ENCODE measurements at regions of chr7 and their contacts with region 1.

Region 1: GRCh38 chr7:25069900-25070443 is 55.1 kb downstream of the CYCS start:
- DNase-seq: peak; percentile 60
- ATAC-seq: peak; percentile 83

Region 2: GRCh38 chr7:24812310-24812945 is 257.5 kb before region 1 on chr7:
- intact Hi-C with region 1: loop called (anchors 5 kb)
- DNase-seq: peak; percentile 71
- ATAC-seq: peak; percentile 88

Region 3: DNA sequence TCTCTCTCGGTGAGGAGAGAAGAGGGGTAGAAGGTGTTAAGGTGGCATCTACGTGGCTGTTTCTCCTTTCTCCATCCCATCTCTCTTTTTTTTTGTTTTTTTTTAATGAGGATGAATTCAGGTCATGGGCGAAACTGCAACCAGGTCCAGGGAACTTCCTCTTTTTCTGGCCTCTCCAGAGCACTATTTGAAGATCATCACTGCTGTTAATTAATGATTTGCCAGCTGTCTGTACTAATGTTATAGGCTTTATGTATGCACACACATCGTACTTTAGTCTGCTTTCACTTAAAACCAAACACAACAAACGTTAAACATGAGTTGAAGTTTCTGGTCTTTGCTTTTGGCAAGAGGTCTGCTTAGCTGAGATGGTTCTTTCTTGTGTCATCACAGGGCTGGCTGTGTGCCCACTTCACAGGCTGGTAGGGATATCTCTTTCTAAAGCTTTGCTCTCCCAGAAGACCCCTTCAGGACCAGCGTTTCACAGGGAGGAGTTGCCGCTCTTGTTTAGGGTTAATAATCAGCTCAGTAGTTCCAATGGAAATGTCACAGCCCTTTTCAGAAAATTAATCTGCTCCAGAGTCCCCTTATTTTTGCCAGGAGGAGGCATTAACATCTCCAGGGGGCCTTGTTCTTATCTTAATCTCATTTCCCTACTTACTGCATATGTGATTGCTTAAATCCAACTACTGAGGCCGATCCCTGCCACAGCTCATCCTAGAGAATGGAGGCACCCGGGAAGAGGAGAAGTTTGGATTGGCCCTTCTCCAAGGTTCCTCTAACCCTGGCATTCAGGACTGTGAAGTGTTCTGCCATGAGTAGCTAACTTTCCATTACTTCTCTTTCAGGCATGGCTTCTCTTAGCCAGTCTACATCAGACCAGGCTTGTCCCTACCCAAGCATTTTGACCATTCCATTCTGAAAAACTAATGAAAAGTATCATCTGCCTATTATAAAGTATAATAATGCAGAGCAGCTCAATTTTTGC is 808.1 kb after region 1 on chr7:
- intact Hi-C with region 1: no loop called
- DNase-seq: no peak
- ATAC-seq: no peak

Measured in sciatic nerve (tissue), 2 donors.